Activated CD4-positive, alpha-beta T cell treated with anti-CD3 and anti-CD28 coated beads for 36 hours (primary cell): ENCODE measurements at regions of chr17 and their contacts with region 1.

Region 1: DNA sequence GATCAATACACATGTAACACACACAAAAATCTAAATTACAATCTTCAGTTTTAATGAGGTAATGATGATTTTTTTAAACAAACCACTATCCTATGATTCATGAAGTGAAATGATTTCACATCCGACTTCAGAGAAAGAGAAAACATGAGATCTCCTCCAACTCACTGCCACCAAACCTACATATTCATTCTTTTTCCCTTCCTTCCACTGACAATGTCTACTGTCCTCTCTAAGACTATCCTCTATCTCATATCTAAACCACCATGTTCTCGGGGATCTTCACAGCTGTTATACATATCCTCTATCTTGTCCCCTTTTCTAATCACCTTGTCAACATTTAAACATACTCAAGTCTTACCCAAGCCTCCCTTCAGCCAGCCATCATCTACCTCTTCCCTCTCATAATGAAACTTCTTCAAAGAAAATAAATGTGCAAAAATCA is 53.5 kb downstream of the SMURF2 start:
- DNase-seq: no peak
- ATAC-seq: peak; percentile 92
- H3K4me3 Mint-ChIP-seq: peak overlapping the region; percentile 32
- H3K27ac Mint-ChIP-seq: peak overlapping the region; percentile 95
- H3K4me1 Mint-ChIP-seq: peaks cover 43% of the 10 kb centered on the region
- H3K27me3 Mint-ChIP-seq: no peaks in the 10 kb centered on the region

Region 2: DNA sequence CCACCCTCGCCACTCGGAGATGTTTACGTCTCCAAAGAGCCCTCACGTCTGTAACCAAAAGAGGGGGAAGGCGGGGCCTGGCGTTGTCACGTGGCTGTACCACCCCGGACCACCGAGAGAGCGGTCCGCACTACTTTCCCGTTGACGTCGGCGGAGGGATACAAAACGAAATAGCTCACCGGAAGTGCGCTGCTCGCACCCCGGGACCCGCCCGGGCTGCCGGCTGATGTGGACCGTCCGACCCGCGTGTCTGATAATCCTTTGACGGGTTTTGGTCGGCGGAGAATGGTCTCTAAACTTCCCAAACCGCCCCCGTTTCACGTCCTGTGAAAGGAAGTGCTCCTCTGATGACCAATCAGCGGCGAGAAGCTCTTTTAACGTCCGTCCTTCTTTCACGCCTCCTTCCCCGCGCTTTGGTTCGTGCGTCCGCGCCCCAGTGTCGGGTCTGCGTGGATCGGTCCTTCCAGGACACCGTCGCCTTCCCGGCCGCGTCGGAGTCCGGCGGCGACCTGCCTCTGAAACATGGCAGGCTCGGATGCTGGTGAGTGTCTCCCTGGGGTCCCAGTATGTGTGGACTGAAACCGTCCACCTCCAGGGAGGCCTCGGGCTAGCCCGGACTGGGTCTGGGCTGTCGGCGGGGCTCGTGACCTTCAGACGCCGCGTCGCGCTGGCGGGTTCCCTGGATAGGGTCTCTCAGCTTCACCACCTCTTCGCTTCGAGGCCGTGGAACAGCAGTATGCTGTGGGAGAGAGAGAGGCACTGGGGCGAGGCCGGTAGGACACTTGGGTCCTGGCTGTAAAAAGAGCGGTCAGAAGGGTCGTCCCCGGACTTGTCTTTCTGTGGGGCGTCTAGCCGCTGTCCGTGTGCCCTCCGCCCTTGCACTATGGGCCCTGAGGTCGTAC is 101.7 kb before region 1 on chr17 and contains the start of gene CEP95:
- CTCF ChIA-PET with region 1: no interaction called
- POLR2A ChIA-PET with region 1: no interaction called
- intact Hi-C with region 1: no loop called
- DNase-seq: peak; percentile 97
- ATAC-seq: peak; percentile 56
- H3K4me3 Mint-ChIP-seq: peak within 1 kb of the TSS; percentile 100
- H3K27ac Mint-ChIP-seq: peak within 1 kb of the TSS; percentile 100
- H3K4me1 Mint-ChIP-seq: peaks cover 48% of the 10 kb centered on the region
- H3K27me3 Mint-ChIP-seq: no peaks in the 10 kb centered on the region
- total RNA-seq, gene CEP95: 40.5 to 42.8 TPM

Region 3: DNA sequence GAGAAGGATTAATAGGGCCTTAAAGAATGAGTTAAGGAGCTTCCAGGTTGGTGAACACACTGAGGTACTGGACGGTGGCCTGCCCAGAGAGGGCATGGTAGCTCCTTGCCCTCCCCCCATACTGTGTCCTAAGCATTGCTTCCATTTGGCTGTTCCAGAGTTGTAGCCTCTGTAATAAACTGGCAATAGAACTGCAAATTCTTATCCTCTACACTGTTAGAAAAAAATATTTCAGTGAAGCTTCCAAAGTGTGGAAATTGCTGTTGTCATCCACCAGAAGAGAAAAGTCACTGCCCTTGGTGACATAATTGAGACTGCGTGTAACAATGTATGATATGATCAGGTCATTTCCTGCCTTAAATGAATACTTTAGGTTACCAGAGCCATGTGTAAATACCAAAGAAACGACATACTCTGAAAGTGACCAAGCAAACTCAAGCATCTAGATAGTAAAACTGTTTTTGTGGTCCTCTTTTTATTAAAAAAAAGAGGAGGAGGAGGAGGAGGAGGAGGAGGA is 35.9 kb before region 1 on chr17:
- CTCF ChIA-PET with region 1: interaction called, 5 read pairs
- POLR2A ChIA-PET with region 1: no interaction called
- intact Hi-C with region 1: loop called in 1 of 2 experiments (anchors 1 kb)
- DNase-seq: no peak
- ATAC-seq: peak; percentile 92
- H3K4me3 Mint-ChIP-seq: peak overlapping the region; percentile 10
- H3K27ac Mint-ChIP-seq: peak overlapping the region; percentile 73
- H3K4me1 Mint-ChIP-seq: peaks cover 12% of the 10 kb centered on the region
- H3K27me3 Mint-ChIP-seq: no peaks in the 10 kb centered on the region

Region 4: DNA sequence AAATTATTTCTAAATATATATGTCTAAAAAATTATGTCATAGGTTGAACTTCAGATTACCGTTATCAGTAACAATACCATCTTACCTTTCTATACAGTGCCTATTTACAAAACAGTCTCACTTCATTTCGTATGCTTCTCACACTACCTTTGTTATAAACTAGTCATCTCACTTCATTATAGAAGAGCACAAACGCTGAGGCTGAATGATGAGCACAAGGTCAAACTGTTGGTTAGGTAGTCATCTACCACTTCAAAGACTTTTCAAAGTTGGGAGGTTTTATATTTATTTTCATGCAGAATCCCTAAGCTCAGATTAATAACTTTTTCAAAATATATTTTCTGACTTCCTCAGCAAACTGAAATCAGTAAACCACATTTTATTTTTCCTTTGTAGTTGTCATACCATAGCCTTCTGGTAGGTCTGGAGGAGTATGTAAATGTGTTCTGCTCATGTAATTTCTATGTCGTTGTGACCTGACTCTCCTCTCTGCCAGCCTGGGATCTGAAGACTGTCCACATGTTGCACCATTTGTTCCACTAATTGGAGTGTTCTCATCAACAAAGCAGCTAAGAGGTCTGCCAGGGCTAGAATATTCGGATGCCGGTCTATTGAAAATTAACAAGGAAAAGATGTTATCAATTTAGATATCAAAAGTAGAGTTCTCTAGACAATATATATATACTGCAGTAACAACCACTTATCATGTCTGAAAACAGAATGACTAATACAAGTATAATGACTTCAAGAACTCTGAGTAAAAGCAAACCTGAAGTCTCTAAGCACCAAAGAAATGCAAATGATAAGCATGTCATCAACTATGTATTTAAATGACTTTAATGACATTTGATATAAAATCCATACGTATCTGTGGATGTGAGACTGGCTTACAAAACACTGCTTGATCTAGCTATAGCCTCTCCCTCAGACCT is 27.9 kb before region 1 on chr17:
- CTCF ChIA-PET with region 1: interaction called, 5 read pairs
- POLR2A ChIA-PET with region 1: no interaction called
- intact Hi-C with region 1: loop called (anchors 1 to 2 kb)
- DNase-seq: peak; percentile 30
- ATAC-seq: peak; percentile 92
- H3K4me3 Mint-ChIP-seq: peak overlapping the region; percentile 15
- H3K27ac Mint-ChIP-seq: peak overlapping the region; percentile 85
- H3K4me1 Mint-ChIP-seq: peaks cover 26% of the 10 kb centered on the region
- H3K27me3 Mint-ChIP-seq: no peaks in the 10 kb centered on the region

Region 5: DNA sequence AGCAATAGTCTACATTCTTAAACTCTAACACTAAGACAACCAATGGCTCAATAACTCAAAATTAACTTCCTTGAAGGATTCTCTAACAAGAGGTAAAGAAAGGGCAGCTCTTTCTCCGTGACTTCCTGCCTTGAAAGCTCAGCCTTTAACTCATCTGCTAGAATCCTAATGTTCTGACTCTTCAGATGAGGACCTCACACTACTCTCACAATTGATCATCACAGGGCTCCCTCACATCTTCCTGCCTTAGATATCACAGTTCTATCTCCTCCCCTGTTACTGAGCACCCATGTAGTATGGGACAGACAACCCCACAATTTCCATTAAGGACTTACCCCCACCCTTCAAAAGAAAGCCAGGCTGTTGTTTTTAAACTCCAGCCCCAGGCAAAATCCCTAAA is 20.1 kb after region 1 on chr17:
- CTCF ChIA-PET with region 1: interaction called, 5 read pairs
- POLR2A ChIA-PET with region 1: no interaction called
- intact Hi-C with region 1: loop called in 1 of 2 experiments (anchors 1 kb)
- DNase-seq: peak; percentile 43
- ATAC-seq: peak; percentile 99
- H3K4me3 Mint-ChIP-seq: peak overlapping the region; percentile 50
- H3K27ac Mint-ChIP-seq: peak overlapping the region; percentile 84
- H3K4me1 Mint-ChIP-seq: peaks cover 56% of the 10 kb centered on the region
- H3K27me3 Mint-ChIP-seq: no peaks in the 10 kb centered on the region

Region 6: DNA sequence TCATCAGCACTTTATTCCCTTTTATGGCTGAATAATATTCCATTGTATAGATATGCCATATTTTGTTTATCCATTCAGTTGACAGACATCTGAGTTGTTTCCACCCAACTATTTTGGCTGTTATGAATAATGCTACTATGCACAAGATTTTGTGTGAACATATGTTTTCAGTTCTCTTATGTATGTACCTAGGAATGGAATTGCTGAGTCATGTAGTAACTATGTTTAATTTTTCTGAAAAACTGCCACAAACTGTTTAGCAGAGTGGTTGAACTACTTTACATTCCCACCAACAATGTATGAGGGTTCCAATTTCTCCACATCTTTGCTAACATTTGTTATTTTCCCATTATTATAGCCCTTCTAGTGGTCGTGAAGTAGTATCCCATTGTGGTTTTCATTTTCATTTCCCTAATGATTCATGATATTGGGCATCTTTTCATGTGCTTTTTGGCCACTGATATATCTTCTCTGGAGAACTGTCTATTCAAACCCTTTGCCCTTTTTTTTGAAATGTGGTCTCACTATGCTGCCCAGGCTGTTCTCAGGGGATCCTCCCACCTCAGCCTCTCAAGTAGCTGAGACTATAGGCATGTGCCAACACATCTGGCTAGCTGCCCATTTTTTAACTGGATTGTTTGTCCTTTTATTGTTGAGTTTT is 27.2 kb after region 1 on chr17:
- CTCF ChIA-PET with region 1: interaction called, 4 read pairs
- POLR2A ChIA-PET with region 1: no interaction called
- intact Hi-C with region 1: loop called (anchors 1 to 2 kb)
- DNase-seq: peak; percentile 29
- ATAC-seq: peak; percentile 79
- H3K4me3 Mint-ChIP-seq: no peak overlapping the region
- H3K27ac Mint-ChIP-seq: peak overlapping the region; percentile 79
- H3K4me1 Mint-ChIP-seq: peaks cover 54% of the 10 kb centered on the region
- H3K27me3 Mint-ChIP-seq: no peaks in the 10 kb centered on the region

Region 7: DNA sequence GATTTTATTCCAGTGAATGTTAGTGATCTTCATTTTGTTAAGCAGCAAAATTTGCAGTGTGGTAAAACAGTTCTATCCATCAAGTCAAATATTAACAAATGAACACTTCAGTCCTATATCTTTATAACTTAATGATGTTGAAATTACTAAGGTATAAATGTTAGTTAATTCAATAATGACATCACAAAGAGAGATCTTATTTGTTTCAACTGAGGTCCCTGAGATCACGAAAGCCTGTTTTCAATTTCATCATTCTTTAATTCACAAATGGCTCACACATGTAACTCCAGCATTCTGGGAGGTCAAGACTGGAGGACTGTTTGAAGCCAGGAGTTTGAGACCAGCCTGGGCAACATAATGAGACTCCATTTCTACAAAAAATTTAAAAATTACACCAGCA is 39.7 kb after region 1 on chr17:
- CTCF ChIA-PET with region 1: interaction called, 8 read pairs
- POLR2A ChIA-PET with region 1: no interaction called
- intact Hi-C with region 1: loop called (anchors 2 kb)
- DNase-seq: no peak
- ATAC-seq: no peak
- H3K4me3 Mint-ChIP-seq: no peak overlapping the region
- H3K27ac Mint-ChIP-seq: peak overlapping the region; percentile 89
- H3K4me1 Mint-ChIP-seq: peaks cover 37% of the 10 kb centered on the region
- H3K27me3 Mint-ChIP-seq: no peaks in the 10 kb centered on the region

Region 8: GRCh38 chr17:64765191-64765958 is 156.8 kb after region 1 on chr17:
- CTCF ChIA-PET with region 1: no interaction called
- POLR2A ChIA-PET with region 1: no interaction called
- intact Hi-C with region 1: no loop called
- DNase-seq: no peak
- ATAC-seq: no peak
- H3K4me3 Mint-ChIP-seq: no peak overlapping the region
- H3K27ac Mint-ChIP-seq: no peak overlapping the region
- H3K4me1 Mint-ChIP-seq: no peaks in the 10 kb centered on the region
- H3K27me3 Mint-ChIP-seq: no peaks in the 10 kb centered on the region